ENCODE measurements at regions of chr12 and their contacts with region 1.

Region 1: DNA sequence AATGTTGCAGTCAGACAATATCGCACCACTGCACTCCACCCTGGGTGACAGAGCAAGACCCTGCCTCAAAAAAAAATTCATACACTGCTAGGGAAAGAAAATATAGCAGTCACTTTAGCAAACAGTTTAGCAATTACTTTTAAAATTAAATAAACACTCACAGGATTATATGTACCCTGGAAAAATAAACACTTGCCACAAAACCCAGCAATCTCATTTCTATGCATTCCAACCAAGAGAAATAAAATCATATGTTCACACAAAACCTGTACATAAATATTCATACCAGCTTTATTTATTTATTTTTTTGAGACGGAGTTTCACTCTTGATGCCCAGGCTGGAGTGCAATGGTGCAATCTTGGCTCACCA is 20.2 kb downstream of the ATXN2 start:
- DNase-seq: no peak

Region 2: DNA sequence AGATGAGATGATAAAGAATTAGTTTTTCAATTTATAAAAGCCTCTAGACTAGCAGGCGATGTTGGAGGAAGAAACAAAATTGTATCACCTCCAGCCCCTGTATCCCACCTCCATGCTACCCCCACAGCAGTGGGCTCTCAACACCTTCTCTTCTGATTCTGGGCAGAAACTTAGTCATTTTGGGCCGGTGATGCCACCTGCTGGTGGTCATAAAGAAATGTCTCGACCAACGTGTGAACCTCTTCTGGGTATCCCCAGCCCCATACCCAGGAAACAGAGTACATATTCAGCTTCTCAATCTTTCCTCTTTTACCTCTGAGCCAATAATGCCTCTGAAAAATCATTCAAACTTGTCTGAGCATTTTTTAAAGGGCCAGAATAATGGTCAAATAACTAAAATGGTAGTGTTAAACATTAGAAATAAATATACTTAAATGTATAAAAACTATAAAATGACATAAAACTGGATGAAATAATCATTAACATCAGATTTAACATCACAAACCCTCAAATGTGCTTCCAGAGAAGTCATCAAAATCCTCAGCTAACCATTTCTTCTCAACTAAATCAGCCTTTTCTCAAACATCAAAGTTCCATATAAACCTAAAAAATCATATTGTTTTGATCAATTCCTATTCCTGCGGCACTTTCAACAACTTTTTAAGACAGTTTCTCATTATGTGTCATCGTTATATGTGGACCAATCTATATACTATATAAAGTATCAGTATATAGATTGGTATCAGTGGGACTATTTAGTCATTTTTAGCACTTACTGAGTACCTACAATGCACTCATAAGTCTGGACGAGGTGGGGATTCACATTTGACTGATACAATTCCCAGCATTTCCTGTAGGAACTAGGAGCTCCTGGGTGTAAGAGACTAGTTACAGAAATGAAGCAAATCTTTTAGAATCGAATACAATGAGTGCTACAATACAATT is 49.3 kb before region 1 on chr12:
- CTCF ChIA-PET with region 1: no interaction called
- POLR2A ChIA-PET with region 1: no interaction called
- DNase-seq: peak; percentile 74

Region 3: DNA sequence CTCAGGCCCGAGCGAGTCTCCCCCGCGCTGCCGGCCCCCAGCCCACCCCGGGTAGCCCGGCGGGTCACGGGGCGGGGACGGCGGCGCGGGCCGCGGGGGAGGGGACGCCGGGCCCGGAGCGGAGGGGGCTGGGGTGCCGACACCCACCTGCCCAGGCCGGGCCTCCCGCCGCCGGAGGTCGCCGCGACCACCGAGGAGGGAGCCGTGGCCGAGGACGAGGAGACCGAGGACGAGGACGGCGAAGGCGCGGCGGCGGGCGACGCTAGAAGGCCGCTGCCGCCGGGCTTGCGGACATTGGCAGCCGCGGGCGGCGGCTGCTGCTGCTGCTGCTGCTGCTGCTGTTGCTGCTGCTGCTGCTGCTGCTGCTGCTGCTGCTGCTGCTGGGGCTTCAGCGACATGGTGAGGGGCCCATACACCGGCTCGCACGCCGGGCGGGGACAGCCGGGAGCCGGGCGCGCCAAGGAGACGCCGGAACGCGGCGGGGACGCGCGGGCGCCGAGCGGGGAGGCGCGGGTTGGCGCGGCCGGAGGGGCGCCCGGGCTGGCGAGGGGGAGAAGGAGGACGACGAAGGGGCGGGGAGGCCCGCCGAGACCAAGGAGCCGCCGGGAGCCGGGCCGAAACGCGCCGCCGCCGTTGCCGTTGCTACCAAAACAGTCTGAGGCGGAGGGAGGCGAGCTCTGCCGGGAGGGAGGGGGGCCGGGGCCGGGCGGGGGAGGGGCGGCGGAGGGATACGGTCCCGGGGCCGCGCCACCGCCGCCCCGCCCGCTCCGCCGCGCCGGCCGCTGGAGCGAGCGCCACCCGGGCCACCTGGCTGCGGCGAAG is 19.9 kb after region 1 on chr12 and contains the start of gene ATXN2:
- CTCF ChIA-PET with region 1: interaction called, 10 read pairs
- POLR2A ChIA-PET with region 1: no interaction called
- DNase-seq: peak; percentile 76